PC-3 (cell line): ENCODE measurements at regions of chr6 and their contacts with region 1.

Region 1: GRCh38 chr6:30396833-30397479 is 52.0 kb downstream of the RPP21 start:
- DNase-seq: peak; percentile 83
- ATAC-seq: peak; percentile 85
- H3K4me3 ChIP-seq: no peak overlapping the region
- H3K27ac ChIP-seq: no peak overlapping the region
- H3K4me1 ChIP-seq: peaks cover 5% of the 10 kb centered on the region; the same call in 1 of the 2 replicates
- H3K27me3 ChIP-seq: peaks cover 30% of the 10 kb centered on the region
- CTCF ChIP-seq: peak; percentile 92

Region 2: DNA sequence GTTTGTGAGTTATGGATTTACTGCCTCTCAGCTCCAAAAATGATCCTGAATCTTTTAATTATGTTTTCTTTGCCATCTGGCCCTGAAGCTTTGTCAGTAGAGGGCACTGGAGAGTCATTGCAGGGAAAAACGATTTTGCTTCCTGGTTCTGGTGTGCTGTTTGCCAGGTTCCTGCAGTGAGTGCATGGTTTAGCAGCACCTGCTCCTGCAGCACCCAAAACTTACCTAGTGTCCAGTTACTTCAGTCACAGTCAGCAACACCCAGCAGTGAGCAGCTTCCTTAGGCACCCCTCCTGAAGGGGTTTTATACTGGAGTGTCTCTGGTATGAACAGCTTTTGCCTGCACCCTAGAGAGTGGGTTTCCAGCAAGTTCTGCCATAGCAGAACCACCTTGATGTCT is 177.7 kb before region 1 on chr6:
- CTCF ChIA-PET with region 1: interaction called, 8 read pairs
- POLR2A ChIA-PET with region 1: interaction called, 3 read pairs
- intact Hi-C with region 1: loop called (anchors 1 kb)
- DNase-seq: peak; percentile 78
- ATAC-seq: peak; percentile 80
- H3K4me3 ChIP-seq: no peak overlapping the region
- H3K27ac ChIP-seq: no peak overlapping the region
- H3K4me1 ChIP-seq: no peaks in the 10 kb centered on the region
- H3K27me3 ChIP-seq: no peaks in the 10 kb centered on the region
- CTCF ChIP-seq: peak; percentile 89

Region 3: GRCh38 chr6:30238174-30238795 is 158.7 kb before region 1 on chr6:
- CTCF ChIA-PET with region 1: interaction called, 3 read pairs
- POLR2A ChIA-PET with region 1: no interaction called
- intact Hi-C with region 1: loop called (anchors 1 kb)
- DNase-seq: peak; percentile 71
- ATAC-seq: peak; percentile 94
- H3K4me3 ChIP-seq: no peak overlapping the region
- H3K27ac ChIP-seq: no peak overlapping the region
- H3K4me1 ChIP-seq: no peaks in the 10 kb centered on the region
- H3K27me3 ChIP-seq: peaks cover 27% of the 10 kb centered on the region
- CTCF ChIP-seq: peak; percentile 76

Region 4: GRCh38 chr6:30357678-30358540 is 39.0 kb before region 1 on chr6:
- CTCF ChIA-PET with region 1: interaction called, 3 read pairs
- POLR2A ChIA-PET with region 1: no interaction called
- intact Hi-C with region 1: loop called (anchors 1 kb)
- DNase-seq: peak; percentile 77
- ATAC-seq: peak; percentile 91
- H3K4me3 ChIP-seq: peak overlapping the region; percentile 66
- H3K27ac ChIP-seq: no peak overlapping the region
- H3K4me1 ChIP-seq: no peaks in the 10 kb centered on the region; the same call in 1 of the 2 replicates
- H3K27me3 ChIP-seq: peaks cover 45% of the 10 kb centered on the region
- CTCF ChIP-seq: peak; percentile 81

Region 5: DNA sequence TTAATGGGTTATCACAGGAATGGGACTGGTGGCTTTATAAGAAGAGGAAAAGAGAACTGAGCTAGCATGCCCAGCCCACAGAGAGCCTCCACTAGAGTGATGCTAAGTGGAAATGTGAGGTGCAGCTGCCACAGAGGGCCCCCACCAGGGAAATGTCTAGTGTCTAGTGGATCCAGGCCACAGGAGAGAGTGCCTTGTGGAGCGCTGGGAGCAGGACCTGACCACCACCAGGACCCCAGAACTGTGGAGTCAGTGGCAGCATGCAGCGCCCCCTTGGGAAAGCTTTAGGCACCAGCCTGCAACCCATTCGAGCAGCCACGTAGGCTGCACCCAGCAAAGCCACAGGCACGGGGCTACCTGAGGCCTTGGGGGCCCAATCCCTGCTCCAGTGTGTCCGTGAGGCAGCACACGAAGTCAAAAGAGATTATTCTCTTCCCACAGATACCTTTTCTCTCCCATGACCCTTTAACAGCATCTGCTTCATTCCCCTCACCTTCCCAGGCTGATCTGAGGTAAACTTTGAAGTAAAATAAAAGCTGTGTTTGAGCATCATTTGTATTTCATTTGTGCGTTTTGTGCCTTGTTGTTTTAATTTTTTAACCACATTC is 96.8 kb after region 1 on chr6:
- CTCF ChIA-PET with region 1: no interaction called
- POLR2A ChIA-PET with region 1: no interaction called
- intact Hi-C with region 1: no loop called
- DNase-seq: no peak
- ATAC-seq: no peak
- H3K4me3 ChIP-seq: no peak overlapping the region
- H3K27ac ChIP-seq: no peak overlapping the region
- H3K4me1 ChIP-seq: peaks cover 19% of the 10 kb centered on the region
- H3K27me3 ChIP-seq: no peaks in the 10 kb centered on the region
- CTCF ChIP-seq: peak; percentile 36; the same call in 1 of the 2 replicates